Cardiac septum (tissue), 1 donor: ENCODE measurements at regions of chr12 and their contacts with region 1.

Region 1: DNA sequence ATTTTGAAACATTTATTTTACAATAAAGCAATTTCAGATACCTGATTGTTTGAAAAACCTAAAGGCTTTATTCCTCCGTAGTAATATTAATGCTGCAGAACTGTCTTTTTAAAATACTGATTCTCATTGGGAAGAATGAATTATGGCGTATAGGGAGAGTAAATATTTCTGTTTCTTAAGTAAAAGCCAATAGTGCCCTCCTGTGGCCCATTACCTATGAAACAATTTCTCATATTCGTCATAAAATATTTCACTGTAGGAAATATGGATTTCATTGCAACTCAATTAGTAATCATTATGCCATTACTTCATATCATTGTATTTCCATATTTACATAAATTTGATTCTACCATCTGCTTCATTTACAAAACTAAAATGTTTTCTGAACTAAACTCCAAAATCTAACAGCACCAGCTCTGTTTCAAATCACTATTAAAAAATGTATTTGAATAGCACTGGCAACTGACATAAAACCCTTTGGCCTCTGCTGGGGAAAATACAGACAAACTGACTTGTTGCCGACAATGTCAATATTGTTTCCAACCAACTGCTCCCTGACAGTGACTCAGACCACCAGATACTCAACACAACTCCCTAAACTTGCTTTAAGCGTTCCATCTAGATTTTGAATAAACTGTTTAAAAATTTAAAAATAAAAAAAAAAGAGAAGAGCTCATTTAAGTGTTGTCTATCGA is 290.3 kb downstream of the NAV3 start:
- DNase-seq: no peak

Region 2: GRCh38 chr12:78002878-78003277 is 118.1 kb before region 1 on chr12:
- intact Hi-C with region 1: loop called (anchors 10 kb)
- DNase-seq: no peak

Region 3: GRCh38 chr12:78167510-78167909 is 46.5 kb after region 1 on chr12:
- intact Hi-C with region 1: no loop called
- DNase-seq: no peak